ENCODE measurements at regions of chr17 and their contacts with region 1.

Region 1: DNA sequence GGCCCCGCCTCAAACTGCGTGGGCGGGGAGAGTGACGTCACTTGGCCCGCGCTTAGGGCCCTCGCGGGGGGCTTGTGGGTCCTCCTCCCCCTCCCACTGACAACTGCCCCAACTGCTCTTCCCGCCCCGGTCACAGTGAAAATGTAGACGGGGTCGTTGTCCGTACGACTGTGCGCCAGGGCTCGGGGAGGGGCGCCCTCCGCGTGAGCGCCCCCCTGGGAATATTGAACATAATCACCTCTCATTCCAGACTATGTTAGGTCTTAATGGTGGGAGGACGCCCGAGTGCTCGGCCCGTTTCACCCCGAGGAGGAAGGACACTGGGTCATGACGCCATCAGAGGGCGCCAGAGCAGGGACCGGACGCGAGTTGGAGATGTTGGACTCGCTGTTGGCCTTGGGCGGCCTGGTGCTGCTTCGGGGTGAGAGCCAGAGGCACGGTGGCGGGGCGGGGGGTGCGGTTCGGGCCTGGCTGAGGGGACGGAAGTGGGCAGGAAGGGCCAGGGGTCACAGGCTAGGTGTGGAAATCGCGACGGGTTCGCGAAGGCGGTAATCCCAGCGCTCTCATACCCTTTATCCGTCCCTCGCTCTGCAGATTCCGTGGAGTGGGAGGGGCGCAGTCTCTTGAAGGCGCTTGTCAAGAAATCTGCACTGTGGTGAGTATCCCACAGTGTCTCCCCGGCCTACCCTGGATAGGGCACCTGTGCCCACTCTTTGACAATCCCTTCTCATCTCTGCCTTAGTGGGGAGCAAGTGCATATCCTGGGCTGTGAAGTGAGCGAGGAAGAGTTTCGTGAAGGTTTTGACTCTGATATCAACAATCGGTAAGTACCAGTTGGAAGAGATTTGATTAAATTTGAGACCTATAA is at the start of gene ELP5:
- DNase-seq: peak; percentile 95 to 97
- ATAC-seq: peak; percentile 77 to 91 (median 84)
- H3K4me3 ChIP-seq: peak within 1 kb of the TSS; percentile 65 to 100 (median 90)
- H3K27ac ChIP-seq: peak within 1 kb of the TSS; percentile 96 to 100 (median 99)
- H3K4me1 ChIP-seq: peaks cover 13 to 53% (median 41%) of the 10 kb centered on the region in 9 donors
- H3K27me3 ChIP-seq: no peaks in the 10 kb centered on the region
- CTCF ChIP-seq: peak in 7 of 9 donors; percentile 12 to 59 (median 35)
- total RNA-seq, gene ELP5: 30.8 to 110 (median 54.8) TPM

Region 2: DNA sequence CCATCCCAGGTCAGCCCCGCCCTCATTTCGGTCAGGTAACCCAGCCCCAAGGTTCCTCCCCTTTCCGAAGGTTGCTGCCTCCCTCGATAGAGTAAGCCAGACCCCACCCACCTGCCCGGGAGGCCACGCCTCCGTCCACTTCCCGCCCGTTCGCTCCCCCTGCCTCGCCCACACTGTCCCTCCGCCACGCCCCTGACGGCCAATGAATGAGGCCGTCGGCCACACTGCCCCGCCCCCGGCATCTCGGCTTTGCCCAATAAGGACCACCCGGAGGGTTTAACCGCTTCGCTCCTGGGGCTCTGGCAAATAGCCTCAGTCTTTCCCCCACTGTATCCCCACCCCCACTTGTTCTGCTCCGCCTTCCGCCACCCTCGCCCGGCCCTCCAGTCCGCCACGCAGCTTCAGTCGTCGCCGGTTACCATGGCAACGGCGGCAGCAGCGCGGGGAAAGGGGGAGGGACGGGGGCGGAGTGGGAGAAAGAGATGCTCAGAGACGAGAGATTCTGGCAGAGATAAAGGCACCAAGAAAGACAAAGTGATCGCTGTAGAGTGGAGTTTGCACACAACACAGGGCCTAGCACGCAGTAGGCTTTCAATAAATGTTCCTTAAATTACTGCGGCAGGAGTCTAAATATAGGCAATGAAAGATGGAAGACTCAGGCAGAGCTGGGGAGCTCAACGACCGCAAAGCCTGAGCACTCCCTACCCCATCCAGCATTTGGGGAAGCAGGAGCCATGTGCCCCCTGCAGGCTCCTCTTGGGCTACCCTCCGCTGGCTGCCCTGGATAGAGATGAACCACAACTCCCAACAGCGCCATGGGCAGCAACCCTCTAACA is 37.9 kb before region 1 on chr17:
- intact Hi-C with region 1: loop called in 1 of 10 experiments (anchors 2 kb)
- DNase-seq: peak; percentile 99
- ATAC-seq: peak; percentile 89 to 94 (median 92)
- H3K4me3 ChIP-seq: peak overlapping the region; percentile 8 to 71 (median 60)
- H3K27ac ChIP-seq: peak overlapping the region in 9 of 10 donors; percentile 53 to 98 (median 69)
- H3K4me1 ChIP-seq: peaks cover 17 to 61% (median 52%) of the 10 kb centered on the region in 9 donors
- H3K27me3 ChIP-seq: no peaks in the 10 kb centered on the region
- CTCF ChIP-seq: peak in 8 of 9 donors; percentile 28 to 75 (median 54)

Region 3: DNA sequence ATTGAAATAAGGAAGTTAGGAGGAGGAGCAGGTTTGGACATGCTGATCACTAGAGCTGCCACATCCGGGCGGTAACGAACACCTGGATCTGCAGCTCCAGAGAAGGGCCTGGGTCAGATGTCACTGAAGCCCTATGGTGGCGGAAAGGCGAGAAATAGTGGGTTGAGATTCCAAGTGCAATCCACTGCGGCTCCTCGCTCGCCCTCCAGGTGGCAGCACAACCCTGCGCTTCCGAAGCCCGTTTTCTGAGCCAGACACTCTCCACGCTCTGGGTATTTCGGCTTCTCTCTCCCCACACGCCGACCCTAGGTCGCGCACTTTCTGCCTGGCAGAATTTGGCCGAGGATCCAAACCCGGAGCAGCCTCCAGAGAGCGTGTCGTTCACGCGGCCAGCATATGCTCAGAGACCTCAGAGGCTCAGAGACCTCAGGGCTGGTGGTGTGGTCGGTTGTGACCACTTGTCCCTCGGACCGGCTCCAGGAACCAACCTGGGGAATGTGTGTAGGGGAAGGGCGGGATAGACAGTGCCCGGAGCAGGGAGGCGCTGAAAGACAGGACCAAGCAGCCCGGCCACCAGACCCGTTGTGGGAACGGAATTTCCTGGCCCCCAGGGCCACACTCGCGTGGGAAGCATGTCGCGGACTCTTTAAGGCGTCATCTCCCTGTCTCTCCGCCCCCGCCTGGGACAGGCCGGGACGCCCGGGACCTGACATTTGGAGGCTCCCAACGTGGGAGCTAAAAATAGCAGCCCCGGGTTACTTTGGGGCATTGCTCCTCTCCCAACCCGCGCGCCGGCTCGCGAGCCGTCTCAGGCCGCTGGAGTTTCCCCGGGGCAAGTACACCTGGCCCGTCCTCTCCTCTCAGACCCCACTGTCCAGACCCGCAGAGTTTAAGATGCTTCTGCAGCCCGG is 28.4 kb after region 1 on chr17:
- intact Hi-C with region 1: loop called in 1 of 10 experiments (anchors 2 kb)
- DNase-seq: peak; percentile 86
- ATAC-seq: peak; percentile 64 to 80 (median 77)
- H3K4me3 ChIP-seq: peak overlapping the region in 9 of 10 donors; percentile 41 to 66 (median 61)
- H3K27ac ChIP-seq: peak overlapping the region; percentile 84 to 98 (median 92)
- H3K4me1 ChIP-seq: peaks cover 0 to 54% (median 28%) of the 10 kb centered on the region in 9 donors
- H3K27me3 ChIP-seq: peaks cover 0 to 39% (median 0%) of the 10 kb centered on the region in 7 donors
- CTCF ChIP-seq: peak; percentile 79 to 97 (median 95)

Region 4: GRCh38 chr17:7296189-7296902 is 43.9 kb after region 1 on chr17:
- intact Hi-C with region 1: loop called in 1 of 10 experiments (anchors 5 kb)
- DNase-seq: peak; percentile 81 to 88
- ATAC-seq: peak; percentile 71 to 93 (median 78)
- H3K4me3 ChIP-seq: peak overlapping the region in 7 of 10 donors; percentile 7 to 32 (median 14)
- H3K27ac ChIP-seq: peak overlapping the region; percentile 35 to 85 (median 80)
- H3K4me1 ChIP-seq: peaks cover 18 to 53% (median 49%) of the 10 kb centered on the region in 9 donors
- H3K27me3 ChIP-seq: peaks cover 0 to 57% (median 34%) of the 10 kb centered on the region in 7 donors
- CTCF ChIP-seq: peak; percentile 91 to 99 (median 96)

Region 5: GRCh38 chr17:7314719-7315569 is 62.5 kb after region 1 on chr17 and contains the start of gene GPS2:
- intact Hi-C with region 1: no loop called
- DNase-seq: peak; percentile 93 to 95
- ATAC-seq: peak; percentile 82 to 95 (median 92)
- H3K4me3 ChIP-seq: peak within 1 kb of the TSS; percentile 82 to 100 (median 94)
- H3K27ac ChIP-seq: peak within 1 kb of the TSS; percentile 85 to 99 (median 94)
- H3K4me1 ChIP-seq: peaks cover 12 to 57% (median 43%) of the 10 kb centered on the region in 9 donors
- H3K27me3 ChIP-seq: no peaks in the 10 kb centered on the region
- CTCF ChIP-seq: no peak
- total RNA-seq, gene GPS2: 49.1 to 81.1 (median 57.4) TPM

Region 6: GRCh38 chr17:7404737-7405349 is 152.4 kb after region 1 on chr17:
- intact Hi-C with region 1: no loop called
- DNase-seq: peak; percentile 61 to 73
- ATAC-seq: peak; percentile 36 to 64 (median 48)
- H3K4me3 ChIP-seq: peak overlapping the region; percentile 54 to 87 (median 68)
- H3K27ac ChIP-seq: peak overlapping the region; percentile 65 to 96 (median 88)
- H3K4me1 ChIP-seq: peaks cover 13 to 28% (median 19%) of the 10 kb centered on the region in 9 donors
- H3K27me3 ChIP-seq: peaks cover 0 to 17% (median 0%) of the 10 kb centered on the region in 7 donors
- CTCF ChIP-seq: peak in 2 of 9 donors; percentile 31 to 35

Region 7: DNA sequence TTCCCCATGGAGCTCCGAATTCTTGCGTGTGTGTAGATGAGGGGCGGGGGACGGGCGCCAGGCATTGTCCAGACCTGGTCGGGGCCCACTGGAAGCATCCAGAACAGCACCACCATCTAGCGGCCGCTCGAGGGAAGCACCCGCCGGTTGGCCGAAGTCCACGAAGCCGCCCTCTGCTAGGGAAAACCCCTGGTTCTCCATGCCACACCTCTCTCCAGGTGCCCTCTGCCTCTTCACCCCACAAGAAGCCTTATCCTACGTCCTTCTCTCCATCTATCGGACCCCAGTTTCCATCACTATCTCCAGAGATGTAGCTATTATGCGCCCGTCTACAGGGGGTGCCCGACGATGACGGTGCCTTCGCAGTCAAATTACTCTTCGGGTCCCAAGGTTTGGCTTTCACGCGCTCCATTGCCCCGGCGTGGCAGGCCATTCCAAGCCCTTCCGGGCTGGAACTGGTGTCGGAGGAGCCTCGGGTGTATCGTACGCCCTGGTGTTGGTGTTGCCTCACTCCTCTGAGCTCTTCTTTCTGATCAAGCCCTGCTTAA is 308.7 kb after region 1 on chr17:
- intact Hi-C with region 1: loop called in 1 of 10 experiments (anchors 10 kb)
- DNase-seq: peak; percentile 91 to 92
- ATAC-seq: peak; percentile 66 to 86 (median 78)
- H3K4me3 ChIP-seq: peak overlapping the region; percentile 84 to 100 (median 96)
- H3K27ac ChIP-seq: peak overlapping the region; percentile 83 to 99 (median 94)
- H3K4me1 ChIP-seq: peaks cover 41 to 73% (median 69%) of the 10 kb centered on the region in 9 donors
- H3K27me3 ChIP-seq: no peaks in the 10 kb centered on the region
- CTCF ChIP-seq: peak; percentile 80 to 93 (median 87)

Region 8: DNA sequence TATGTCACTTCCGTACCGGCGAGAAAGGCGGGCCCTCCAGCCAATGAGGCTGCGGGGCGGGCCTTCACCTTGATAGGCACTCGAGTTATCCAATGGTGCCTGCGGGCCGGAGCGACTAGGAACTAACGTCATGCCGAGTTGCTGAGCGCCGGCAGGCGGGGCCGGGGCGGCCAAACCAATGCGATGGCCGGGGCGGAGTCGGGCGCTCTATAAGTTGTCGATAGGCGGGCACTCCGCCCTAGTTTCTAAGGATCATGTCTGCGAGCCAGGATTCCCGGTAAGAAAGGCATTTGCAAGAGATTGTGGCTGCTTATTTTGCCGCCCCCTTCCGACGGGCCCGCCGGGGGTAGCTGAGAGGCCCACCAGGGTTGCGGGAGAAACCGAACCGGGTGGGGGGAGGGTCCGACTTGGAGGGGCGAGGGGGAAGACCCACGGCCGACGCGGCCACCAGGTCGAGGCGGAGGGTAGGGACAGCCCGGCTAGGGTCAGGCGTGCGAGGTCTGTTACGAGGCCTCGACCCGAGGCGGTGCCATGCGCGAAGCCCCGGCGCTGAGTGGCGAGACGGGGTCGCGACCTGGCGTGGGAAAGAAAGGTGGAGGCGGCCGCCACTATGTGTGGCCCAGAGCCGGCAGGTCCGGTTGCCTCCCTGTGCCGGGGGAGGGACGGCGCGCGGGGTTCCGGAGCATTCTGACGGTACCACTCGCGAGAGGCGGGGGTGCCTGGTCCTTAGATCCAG is 320.3 kb after region 1 on chr17:
- intact Hi-C with region 1: loop called in 2 of 10 experiments (anchors 10 kb)
- DNase-seq: peak in 1 of 2 donors; percentile 100
- ATAC-seq: peak; percentile 93 to 97 (median 94)
- H3K4me3 ChIP-seq: peak overlapping the region; percentile 87 to 100 (median 98)
- H3K27ac ChIP-seq: peak overlapping the region; percentile 95 to 100 (median 99)
- H3K4me1 ChIP-seq: peaks cover 14 to 53% (median 33%) of the 10 kb centered on the region in 9 donors
- H3K27me3 ChIP-seq: no peaks in the 10 kb centered on the region
- CTCF ChIP-seq: peak in 1 of 9 donors; percentile 6